CD8-positive, alpha-beta T cell (primary cell): ENCODE measurements at regions of chr11 and their contacts with region 1.

Region 1: DNA sequence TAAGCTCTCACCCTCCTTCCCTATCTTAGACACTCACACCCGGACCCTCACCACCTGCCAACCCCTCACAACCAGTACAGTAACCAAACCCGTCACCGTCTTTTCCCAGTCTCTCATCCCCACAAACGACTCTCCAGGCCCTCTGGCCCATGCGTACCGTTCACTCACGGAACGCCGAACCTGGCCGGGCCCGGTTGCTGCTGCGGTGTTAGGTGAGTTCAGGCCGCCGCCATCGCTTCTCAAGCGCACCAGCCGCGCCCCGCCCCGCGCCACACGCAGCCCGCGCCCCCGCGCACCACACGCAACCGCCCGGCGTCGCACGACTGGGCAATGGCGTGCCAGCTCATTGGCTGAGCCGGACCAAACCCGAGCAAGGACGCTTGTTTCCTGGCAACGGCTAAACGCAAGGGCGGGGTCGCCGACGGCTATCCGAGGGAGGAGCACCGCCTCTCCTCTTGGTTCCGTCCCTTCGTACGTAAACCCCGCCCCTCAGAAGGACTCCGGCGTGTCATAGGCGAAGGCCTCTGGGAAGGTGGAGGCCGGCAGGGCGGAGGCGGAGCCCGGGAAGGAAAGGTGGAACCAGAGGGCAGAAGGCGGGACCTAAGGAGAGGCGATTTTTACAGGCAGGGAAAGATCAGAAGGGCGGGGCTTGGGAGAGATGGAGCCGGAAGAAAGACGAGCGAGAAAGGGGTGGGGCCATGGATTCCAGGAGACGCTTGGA is at the start of gene FHIP1B:
- DNase-seq: peak; percentile 98 to 100 (median 99)
- ATAC-seq: peak; percentile 91
- H3K4me3 ChIP-seq: peak within 1 kb of the TSS; percentile 85 to 89
- H3K4me3 Mint-ChIP-seq: peak within 1 kb of the TSS; percentile 98
- H3K27ac ChIP-seq: peak within 1 kb of the TSS; percentile 76 to 88
- H3K27ac Mint-ChIP-seq: peak within 1 kb of the TSS; percentile 96
- H3K4me1 ChIP-seq: peaks cover 21% of the 10 kb centered on the region
- H3K4me1 Mint-ChIP-seq: peaks cover 45% of the 10 kb centered on the region
- H3K27me3 ChIP-seq: no peaks in the 10 kb centered on the region
- H3K27me3 Mint-ChIP-seq: no peaks in the 10 kb centered on the region
- CTCF ChIP-seq: no peak
- total RNA-seq, gene FHIP1B: 38.3 to 38.6 TPM

Region 2: DNA sequence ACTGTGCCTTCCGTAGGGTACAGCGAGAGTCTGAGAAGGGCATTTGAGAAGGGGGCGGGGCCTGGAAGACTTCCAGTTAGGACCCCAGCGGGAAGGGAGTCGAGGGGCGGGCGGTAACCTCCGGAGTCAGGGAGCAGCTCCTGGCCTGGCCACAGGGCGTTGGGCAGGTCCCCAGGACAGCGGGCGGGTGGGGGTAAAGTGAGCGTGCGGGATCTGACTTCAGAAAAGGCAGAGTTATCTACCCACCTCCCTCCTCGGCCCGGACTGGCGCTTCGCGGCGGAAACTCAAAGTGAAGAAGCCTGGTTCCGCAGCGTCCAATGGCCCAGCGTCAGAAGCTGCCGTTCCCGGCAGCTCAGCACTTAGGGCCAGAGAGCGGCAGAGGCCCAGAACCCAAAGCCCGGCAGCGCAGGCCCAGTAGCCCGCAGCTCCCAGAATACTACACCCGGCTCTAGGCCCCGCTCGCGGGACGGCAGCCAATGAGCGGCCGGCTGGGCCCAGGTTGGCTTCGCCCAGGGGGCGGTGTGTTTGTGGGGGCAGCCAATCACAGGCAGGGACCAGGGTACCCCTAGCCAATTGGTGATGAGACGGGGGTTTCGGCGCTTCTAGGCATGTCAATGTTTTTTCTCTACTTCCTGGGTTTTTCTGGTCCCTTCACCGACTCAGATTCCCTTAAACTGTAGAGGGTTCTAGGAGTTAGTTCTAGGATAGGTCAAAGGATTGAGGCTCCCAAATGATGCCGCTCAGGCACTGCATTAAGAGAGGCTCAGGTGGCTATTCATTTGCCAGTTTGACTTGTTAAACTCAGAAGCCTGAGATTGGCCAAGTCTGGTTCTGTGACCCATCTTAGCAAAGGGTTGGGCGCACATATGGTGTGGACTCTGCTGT is 1626.5 kb before region 1 on chr11 and contains the start of gene TRIM68:
- CTCF ChIA-PET with region 1: no interaction called
- POLR2A ChIA-PET with region 1: no interaction called
- intact Hi-C with region 1: loop called in 1 of 2 experiments (anchors 2 kb)
- DNase-seq: peak; percentile 89 to 96 (median 95)
- ATAC-seq: peak; percentile 99
- H3K4me3 ChIP-seq: peak within 1 kb of the TSS; percentile 81 to 84
- H3K4me3 Mint-ChIP-seq: peak within 1 kb of the TSS; percentile 93
- H3K27ac ChIP-seq: peak within 1 kb of the TSS; percentile 76 to 85
- H3K27ac Mint-ChIP-seq: peak within 1 kb of the TSS; percentile 92
- H3K4me1 ChIP-seq: peaks cover 33% of the 10 kb centered on the region
- H3K4me1 Mint-ChIP-seq: peaks cover 56% of the 10 kb centered on the region
- H3K27me3 ChIP-seq: no peaks in the 10 kb centered on the region
- H3K27me3 Mint-ChIP-seq: no peaks in the 10 kb centered on the region
- CTCF ChIP-seq: no peak
- total RNA-seq, gene TRIM68: 6.0 to 6.9 TPM

Region 3: GRCh38 chr11:5234381-5234834 is 1000.1 kb before region 1 on chr11 and contains the start of gene HBD:
- CTCF ChIA-PET with region 1: no interaction called
- POLR2A ChIA-PET with region 1: no interaction called
- intact Hi-C with region 1: no loop called
- DNase-seq: no peak
- ATAC-seq: no peak
- H3K4me3 ChIP-seq: no peak within 1 kb of the TSS
- H3K4me3 Mint-ChIP-seq: no peak within 1 kb of the TSS
- H3K27ac ChIP-seq: no peak within 1 kb of the TSS
- H3K27ac Mint-ChIP-seq: no peak within 1 kb of the TSS
- H3K4me1 ChIP-seq: no peaks in the 10 kb centered on the region
- H3K4me1 Mint-ChIP-seq: no peaks in the 10 kb centered on the region
- H3K27me3 ChIP-seq: peaks cover 0 to 3% of the 10 kb centered on the region in 2 experiments
- H3K27me3 Mint-ChIP-seq: no peaks in the 10 kb centered on the region
- CTCF ChIP-seq: no peak
- total RNA-seq, gene HBD: not detected

Region 4: GRCh38 chr11:5684646-5685362 is 549.7 kb before region 1 on chr11 and contains the start of gene TRIM5:
- CTCF ChIA-PET with region 1: no interaction called
- POLR2A ChIA-PET with region 1: no interaction called
- intact Hi-C with region 1: loop called (anchors 5 to 10 kb)
- DNase-seq: peak; percentile 55 to 93 (median 79)
- ATAC-seq: peak; percentile 86
- H3K4me3 ChIP-seq: peak within 1 kb of the TSS; percentile 73 to 93
- H3K4me3 Mint-ChIP-seq: peak within 1 kb of the TSS; percentile 93
- H3K27ac ChIP-seq: peak within 1 kb of the TSS; percentile 74 to 92
- H3K27ac Mint-ChIP-seq: peak within 1 kb of the TSS; percentile 95
- H3K4me1 ChIP-seq: peaks cover 19% of the 10 kb centered on the region
- H3K4me1 Mint-ChIP-seq: peaks cover 67% of the 10 kb centered on the region
- H3K27me3 ChIP-seq: no peaks in the 10 kb centered on the region
- H3K27me3 Mint-ChIP-seq: no peaks in the 10 kb centered on the region
- CTCF ChIP-seq: peak; percentile 79
- total RNA-seq, gene TRIM5: 3.8 to 6.0 TPM

Region 5: GRCh38 chr11:6389921-6390724 is 155.6 kb after region 1 on chr11 and contains the start of gene SMPD1:
- CTCF ChIA-PET with region 1: no interaction called
- POLR2A ChIA-PET with region 1: no interaction called
- intact Hi-C with region 1: loop called (anchors 1 to 10 kb)
- DNase-seq: peak; percentile 90 to 97 (median 94)
- ATAC-seq: peak; percentile 88
- H3K4me3 ChIP-seq: peak within 1 kb of the TSS; percentile 84 to 90
- H3K4me3 Mint-ChIP-seq: peak within 1 kb of the TSS; percentile 93
- H3K27ac ChIP-seq: peak within 1 kb of the TSS; percentile 85 to 95
- H3K27ac Mint-ChIP-seq: peak within 1 kb of the TSS; percentile 98
- H3K4me1 ChIP-seq: peaks cover 52% of the 10 kb centered on the region
- H3K4me1 Mint-ChIP-seq: peaks cover 68% of the 10 kb centered on the region
- H3K27me3 ChIP-seq: no peaks in the 10 kb centered on the region
- H3K27me3 Mint-ChIP-seq: no peaks in the 10 kb centered on the region
- CTCF ChIP-seq: no peak
- total RNA-seq, gene SMPD1: 53.4 to 53.7 TPM

Region 6: GRCh38 chr11:6603287-6604080 is 368.9 kb after region 1 on chr11 and contains the starts of genes ILK and RRP8:
- CTCF ChIA-PET with region 1: no interaction called
- POLR2A ChIA-PET with region 1: no interaction called
- intact Hi-C with region 1: loop called (anchors 2 kb)
- DNase-seq: peak; percentile 66 to 92 (median 87)
- ATAC-seq: peak; percentile 78
- H3K4me3 ChIP-seq: peak within 1 kb of the TSS; percentile 93 to 97
- H3K4me3 Mint-ChIP-seq: no peak within 1 kb of the TSS
- H3K27ac ChIP-seq: peak within 1 kb of the TSS; percentile 65 to 88
- H3K27ac Mint-ChIP-seq: no peak within 1 kb of the TSS
- H3K4me1 ChIP-seq: peaks cover 60% of the 10 kb centered on the region
- H3K4me1 Mint-ChIP-seq: peaks cover 40% of the 10 kb centered on the region
- H3K27me3 ChIP-seq: no peaks in the 10 kb centered on the region
- H3K27me3 Mint-ChIP-seq: no peaks in the 10 kb centered on the region
- CTCF ChIP-seq: no peak
- total RNA-seq, gene ILK: 26.6 to 31.6 TPM
- total RNA-seq, gene RRP8: 29.1 to 31.3 TPM

Region 7: GRCh38 chr11:7986768-7987559 is 1752.4 kb after region 1 on chr11 and contains the start of gene EIF3F:
- CTCF ChIA-PET with region 1: no interaction called
- POLR2A ChIA-PET with region 1: no interaction called
- intact Hi-C with region 1: loop called in 1 of 2 experiments (anchors 5 kb)
- DNase-seq: peak; percentile 79 to 99 (median 88)
- ATAC-seq: peak; percentile 96
- H3K4me3 ChIP-seq: peak within 1 kb of the TSS; percentile 68 to 71
- H3K4me3 Mint-ChIP-seq: peak within 1 kb of the TSS; percentile 95
- H3K27ac ChIP-seq: peak within 1 kb of the TSS; percentile 57 to 84
- H3K27ac Mint-ChIP-seq: peak within 1 kb of the TSS; percentile 97
- H3K4me1 ChIP-seq: peaks cover 32% of the 10 kb centered on the region
- H3K4me1 Mint-ChIP-seq: peaks cover 50% of the 10 kb centered on the region
- H3K27me3 ChIP-seq: no peaks in the 10 kb centered on the region
- H3K27me3 Mint-ChIP-seq: no peaks in the 10 kb centered on the region
- CTCF ChIP-seq: peak; percentile 88
- total RNA-seq, gene EIF3F: 359 to 366 TPM